Mammary epithelial cell (primary cell): ENCODE measurements at regions of chr5 and their contacts with region 1.

Region 1: DNA sequence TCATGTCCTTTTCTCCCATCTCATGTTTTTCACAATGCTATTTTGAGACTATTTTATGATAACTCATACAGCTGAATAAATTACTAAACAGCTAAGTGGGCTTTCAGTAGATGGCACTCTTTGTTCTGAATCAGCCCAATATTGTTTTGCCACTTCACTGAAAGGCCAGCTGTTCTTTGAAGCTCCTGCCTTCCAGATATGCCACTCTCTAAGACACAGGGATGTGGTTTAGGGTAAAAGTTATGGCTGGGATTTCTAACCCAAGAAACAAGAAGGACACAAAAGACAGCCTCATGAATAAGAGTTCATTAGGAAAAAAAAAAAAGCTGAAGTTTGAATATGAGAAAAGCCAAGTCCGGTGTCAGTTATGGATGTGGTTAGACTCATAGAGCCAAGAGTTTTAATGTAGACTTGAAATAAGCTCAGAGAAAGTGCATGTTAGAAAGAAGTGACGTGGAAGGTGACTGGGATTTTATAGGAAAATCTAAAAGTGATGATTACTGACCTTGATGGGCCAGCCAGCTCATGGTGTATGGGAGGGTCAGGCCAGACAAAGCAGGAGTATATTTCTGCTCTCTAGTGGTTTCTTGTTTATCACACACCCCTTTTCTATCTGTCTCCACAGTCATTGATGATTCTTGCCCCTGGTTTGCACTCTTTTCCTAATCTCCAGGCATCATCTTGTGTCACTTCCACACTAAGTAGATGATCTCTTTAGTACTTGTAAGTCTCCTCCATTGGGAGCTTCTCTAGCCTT is 488.5 kb downstream of the NR2F1-AS1 start:
- DNase-seq: peak; percentile 42
- H3K4me3 ChIP-seq: no peak overlapping the region
- H3K27ac ChIP-seq: no peak overlapping the region
- H3K4me1 ChIP-seq: peaks cover 3% of the 10 kb centered on the region
- H3K27me3 ChIP-seq: no peaks in the 10 kb centered on the region
- CTCF ChIP-seq: peak; percentile 16 to 58

Region 2: GRCh38 chr5:93062548-93062947 is 30.0 kb before region 1 on chr5:
- CTCF ChIA-PET with region 1: no interaction called
- dilution Hi-C with region 1: no loop called
- in situ Hi-C with region 1: no loop called
- intact Hi-C with region 1: no loop called
- DNase-seq: no peak
- H3K4me3 ChIP-seq: no peak overlapping the region
- H3K27ac ChIP-seq: no peak overlapping the region
- H3K4me1 ChIP-seq: peaks cover 2% of the 10 kb centered on the region
- H3K27me3 ChIP-seq: no peaks in the 10 kb centered on the region
- CTCF ChIP-seq: peak; percentile 37 to 50

Region 3: GRCh38 chr5:93189707-93190120 is 97.2 kb after region 1 on chr5:
- CTCF ChIA-PET with region 1: interaction called, 12 read pairs
- dilution Hi-C with region 1: no loop called
- in situ Hi-C with region 1: no loop called
- intact Hi-C with region 1: loop called (anchors 1 kb)
- DNase-seq: peak; percentile 98
- H3K4me3 ChIP-seq: no peak overlapping the region
- H3K27ac ChIP-seq: peak overlapping the region; percentile 18
- H3K4me1 ChIP-seq: peaks cover 61% of the 10 kb centered on the region
- H3K27me3 ChIP-seq: no peaks in the 10 kb centered on the region
- CTCF ChIP-seq: no peak

Region 4: DNA sequence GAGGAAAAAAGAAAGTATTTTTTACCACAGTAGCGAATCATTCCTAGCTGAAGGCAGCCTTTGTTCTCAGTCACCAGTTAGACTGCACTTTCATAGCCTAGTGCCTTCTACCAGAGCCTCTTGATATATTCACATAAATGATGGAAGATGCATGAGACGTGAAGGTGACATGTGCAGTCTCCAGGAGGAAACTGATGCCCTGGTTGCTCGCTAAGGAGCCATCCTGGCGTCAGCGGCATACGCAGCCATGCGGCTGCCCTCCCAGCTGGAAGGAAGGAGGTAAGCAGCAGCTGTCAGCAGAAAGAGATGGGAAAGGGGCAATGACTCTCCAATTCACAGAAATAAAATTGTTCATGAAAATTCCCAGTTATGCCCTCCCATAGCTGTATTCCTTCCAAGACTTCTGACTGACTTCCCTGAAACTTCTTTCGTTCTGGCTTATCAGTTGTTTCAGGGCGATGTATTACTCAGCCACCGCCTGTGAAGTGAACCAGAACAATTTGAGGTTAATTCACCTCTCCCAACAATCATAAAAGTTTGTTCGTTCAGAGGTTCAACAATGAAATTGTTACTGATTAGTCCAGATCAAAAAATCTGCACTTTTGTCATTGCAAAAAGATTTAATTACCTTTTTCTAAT is 157.2 kb after region 1 on chr5:
- CTCF ChIA-PET with region 1: interaction called, 6 read pairs
- dilution Hi-C with region 1: no loop called
- in situ Hi-C with region 1: no loop called
- intact Hi-C with region 1: loop called (anchors 10 kb)
- DNase-seq: peak; percentile 53
- H3K4me3 ChIP-seq: peak overlapping the region; percentile 34 to 42 (median 36)
- H3K27ac ChIP-seq: peak overlapping the region; percentile 48
- H3K4me1 ChIP-seq: peaks cover 16% of the 10 kb centered on the region
- H3K27me3 ChIP-seq: no peaks in the 10 kb centered on the region
- CTCF ChIP-seq: no peak

Region 5: GRCh38 chr5:93407454-93407853 is 314.9 kb after region 1 on chr5:
- CTCF ChIA-PET with region 1: no interaction called
- dilution Hi-C with region 1: no loop called
- in situ Hi-C with region 1: no loop called
- intact Hi-C with region 1: loop called (anchors 10 kb)
- DNase-seq: no peak
- H3K4me3 ChIP-seq: no peak overlapping the region
- H3K27ac ChIP-seq: no peak overlapping the region
- H3K4me1 ChIP-seq: no peaks in the 10 kb centered on the region
- H3K27me3 ChIP-seq: no peaks in the 10 kb centered on the region
- CTCF ChIP-seq: no peak